WTC11 (cell line): ENCODE measurements at regions of chr11 and their contacts with region 1.

Region 1: DNA sequence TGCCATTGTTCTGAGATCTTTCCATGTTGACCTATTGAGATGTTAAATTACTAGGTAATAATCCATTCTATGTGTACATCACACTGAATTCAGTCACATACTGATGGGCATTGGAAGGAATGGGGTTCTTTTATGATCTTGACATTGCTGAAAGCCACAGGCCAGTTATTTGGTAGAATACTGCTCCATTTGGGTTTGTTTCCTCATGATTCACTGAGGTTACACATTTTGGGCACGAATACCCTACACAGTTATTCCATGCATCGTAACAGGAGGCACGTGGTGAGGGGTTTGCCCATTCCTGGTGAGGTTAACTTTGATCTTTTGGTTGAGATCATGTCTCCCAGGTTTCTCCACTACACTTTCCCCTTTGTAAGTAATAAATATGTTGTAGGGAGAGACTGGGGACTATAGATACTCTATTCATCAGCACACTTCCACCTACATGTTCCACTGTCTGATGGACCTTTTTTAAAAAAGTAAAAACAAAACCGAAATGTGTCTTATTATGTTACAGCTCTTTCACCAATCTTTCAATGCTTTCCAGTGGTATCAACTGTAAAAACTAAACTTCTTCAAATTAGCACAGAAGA is 12.0 kb upstream of the FOLR1 start:
- DNase-seq: no peak
- ATAC-seq: no peak
- H3K4me3 Mint-ChIP-seq: no peak overlapping the region
- H3K27ac Mint-ChIP-seq: no peak overlapping the region
- H3K4me1 Mint-ChIP-seq: no peaks in the 10 kb centered on the region
- H3K27me3 Mint-ChIP-seq: peaks cover 15% of the 10 kb centered on the region
- CTCF ChIP-seq: no peak

Region 2: GRCh38 chr11:72222907-72223614 is 43.2 kb after region 1 on chr11:
- CTCF ChIA-PET with region 1: interaction called, 11 read pairs
- POLR2A ChIA-PET with region 1: no interaction called
- DNase-seq: peak; percentile 96
- ATAC-seq: peak; percentile 72
- H3K4me3 Mint-ChIP-seq: peak overlapping the region; percentile 73
- H3K27ac Mint-ChIP-seq: peak overlapping the region; percentile 80
- H3K4me1 Mint-ChIP-seq: peaks cover 29% of the 10 kb centered on the region
- H3K27me3 Mint-ChIP-seq: peaks cover 7% of the 10 kb centered on the region; the same call in 1 of the 2 replicates
- CTCF ChIP-seq: no peak

Region 3: DNA sequence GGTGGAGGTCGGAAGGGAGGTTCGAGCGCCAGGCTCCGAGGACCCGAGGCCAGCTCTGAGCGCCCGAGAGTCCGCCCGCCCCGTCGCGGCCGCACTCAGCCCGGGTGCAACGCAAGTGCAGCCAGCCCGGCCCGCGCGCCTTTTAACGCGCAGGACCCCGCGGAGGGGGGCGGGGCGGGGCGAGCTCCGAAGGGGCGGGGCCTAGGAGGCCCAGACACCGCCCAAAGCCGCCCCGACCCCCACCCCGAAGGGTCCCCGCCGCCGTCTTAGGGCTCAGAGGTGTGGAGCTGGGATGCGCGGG is 64.1 kb after region 1 on chr11 and contains the start of gene PHOX2A:
- CTCF ChIA-PET with region 1: no interaction called
- POLR2A ChIA-PET with region 1: no interaction called
- DNase-seq: peak; percentile 68
- ATAC-seq: peak; percentile 36
- H3K4me3 Mint-ChIP-seq: peak within 1 kb of the TSS; percentile 74
- H3K27ac Mint-ChIP-seq: no peak within 1 kb of the TSS
- H3K4me1 Mint-ChIP-seq: peaks cover 35% of the 10 kb centered on the region
- H3K27me3 Mint-ChIP-seq: peaks cover 45% of the 10 kb centered on the region
- CTCF ChIP-seq: no peak
- total RNA-seq, gene PHOX2A: 1.3 to 1.6 TPM (median 1.3 TPM) in 3 replicates